ENCODE measurements at regions of chr9 and their contacts with region 1.

Region 1: GRCh38 chr9:128304149-128304974 is 17.9 kb downstream of the TRUB2 start:
- DNase-seq: no peak
- ATAC-seq: no peak
- H3K4me3 ChIP-seq: no peak overlapping the region
- H3K27ac ChIP-seq: no peak overlapping the region
- H3K4me1 ChIP-seq: peaks cover 48 to 59% of the 10 kb centered on the region in 2 experiments
- H3K27me3 ChIP-seq: no peaks in the 10 kb centered on the region
- CTCF ChIP-seq: no peak
- POLR2A ChIP-seq: no peak
- RAD21 ChIP-seq: no peak

Region 2: DNA sequence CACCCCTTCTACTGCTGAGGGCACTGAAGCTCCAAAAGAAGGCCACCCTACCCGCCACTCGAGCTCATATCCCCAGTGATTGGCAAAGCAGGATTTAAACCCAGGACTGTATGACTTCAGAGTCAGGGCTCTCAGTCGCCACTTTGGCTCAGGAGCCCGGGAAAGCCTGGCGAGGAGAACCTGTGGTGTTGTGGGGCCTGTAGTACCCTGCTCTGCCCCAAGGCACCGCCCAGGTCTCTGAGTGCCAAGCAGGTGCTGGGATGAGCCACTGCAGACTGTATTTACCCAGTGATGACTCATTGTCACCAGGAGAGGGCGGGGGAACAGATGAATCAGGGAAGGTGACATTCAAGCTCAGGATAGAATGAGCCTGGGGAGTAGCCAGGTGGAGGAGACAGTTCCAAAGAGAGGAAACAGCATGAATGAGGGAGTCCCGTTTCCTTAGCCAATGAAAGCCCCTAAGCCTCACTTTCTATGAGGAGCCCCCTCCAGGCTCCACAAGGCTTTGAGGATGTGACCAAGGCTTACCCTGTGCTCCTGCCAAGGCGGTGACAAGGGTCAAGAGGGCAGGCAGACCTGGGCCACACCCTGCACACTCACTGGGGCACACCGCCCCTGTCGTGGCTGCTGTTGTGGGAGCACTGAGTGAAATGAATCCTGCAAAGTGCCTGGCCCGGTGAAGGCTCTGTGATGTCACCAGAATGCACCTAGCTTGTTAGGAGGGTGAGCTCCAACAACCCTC is 348.9 kb before region 1 on chr9:
- CTCF ChIA-PET with region 1: no interaction called
- POLR2A ChIA-PET with region 1: no interaction called
- RAD21 ChIA-PET with region 1: no interaction called
- intact Hi-C with region 1: no loop called
- DNase-seq: peak; percentile 98
- ATAC-seq: peak; percentile 93
- H3K4me3 ChIP-seq: peak overlapping the region; percentile 26 to 49
- H3K27ac ChIP-seq: peak overlapping the region; percentile 79
- H3K4me1 ChIP-seq: peaks cover 61 to 79% of the 10 kb centered on the region in 2 experiments
- H3K27me3 ChIP-seq: no peaks in the 10 kb centered on the region
- CTCF ChIP-seq: peak in 2 of 3 experiments; percentile 45 to 57; a peak in 4 of 6 replicates
- POLR2A ChIP-seq: no peak
- RAD21 ChIP-seq: no peak

Region 3: DNA sequence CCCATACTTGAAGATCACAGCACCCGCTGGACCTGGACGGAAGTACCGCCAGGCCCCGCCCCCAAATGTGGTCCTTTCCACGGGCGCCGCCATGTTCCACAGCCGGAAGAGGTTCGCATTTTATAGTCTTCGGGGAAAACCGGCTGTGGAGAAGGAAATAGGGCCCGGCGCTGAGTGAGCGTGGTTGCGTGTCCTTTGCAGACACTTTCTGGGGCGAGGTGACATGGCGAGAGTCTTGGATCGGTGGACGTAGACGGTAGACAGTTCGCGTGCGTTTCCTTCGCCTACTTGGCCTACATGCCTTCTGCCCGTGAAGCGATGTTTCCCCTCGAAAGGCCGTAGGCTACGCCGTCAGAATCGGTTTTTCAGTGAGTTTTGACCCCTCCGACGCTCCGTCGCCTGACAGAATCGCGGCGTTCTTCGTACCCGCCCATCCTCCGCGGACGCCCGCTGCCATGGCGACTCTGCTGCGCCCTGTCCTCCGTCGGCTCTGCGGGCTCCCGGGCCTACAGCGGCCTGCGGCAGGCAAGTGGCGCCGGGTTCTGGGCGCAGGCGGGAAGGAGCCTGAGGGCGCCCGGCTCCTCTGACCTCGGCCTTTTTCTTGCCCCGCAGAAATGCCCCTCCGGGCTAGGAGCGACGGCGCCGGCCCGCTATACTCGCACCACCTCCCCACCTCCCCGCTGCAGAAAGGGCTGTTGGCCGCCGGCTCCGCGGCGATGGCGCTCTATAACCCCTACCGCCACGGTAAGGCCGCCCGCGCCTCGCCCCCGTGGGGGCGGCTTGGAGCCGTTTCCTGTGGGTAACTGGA is 18.2 kb after region 1 on chr9 and contains the starts of genes COQ4 and TRUB2:
- CTCF ChIA-PET with region 1: no interaction called
- POLR2A ChIA-PET with region 1: interaction called, 5 read pairs
- RAD21 ChIA-PET with region 1: no interaction called
- intact Hi-C with region 1: loop called (anchors 2 kb)
- DNase-seq: peak; percentile 92
- ATAC-seq: peak; percentile 86
- H3K4me3 ChIP-seq: peak within 1 kb of the TSS; percentile 99 to 100
- H3K27ac ChIP-seq: peak within 1 kb of the TSS; percentile 93
- H3K4me1 ChIP-seq: peaks cover 8 to 19% of the 10 kb centered on the region in 2 experiments
- H3K27me3 ChIP-seq: no peaks in the 10 kb centered on the region
- CTCF ChIP-seq: no peak
- POLR2A ChIP-seq: peak; percentile 27
- RAD21 ChIP-seq: no peak
- total RNA-seq, gene COQ4: 45.8 TPM
- total RNA-seq, gene TRUB2: 42.1 TPM

Region 4: DNA sequence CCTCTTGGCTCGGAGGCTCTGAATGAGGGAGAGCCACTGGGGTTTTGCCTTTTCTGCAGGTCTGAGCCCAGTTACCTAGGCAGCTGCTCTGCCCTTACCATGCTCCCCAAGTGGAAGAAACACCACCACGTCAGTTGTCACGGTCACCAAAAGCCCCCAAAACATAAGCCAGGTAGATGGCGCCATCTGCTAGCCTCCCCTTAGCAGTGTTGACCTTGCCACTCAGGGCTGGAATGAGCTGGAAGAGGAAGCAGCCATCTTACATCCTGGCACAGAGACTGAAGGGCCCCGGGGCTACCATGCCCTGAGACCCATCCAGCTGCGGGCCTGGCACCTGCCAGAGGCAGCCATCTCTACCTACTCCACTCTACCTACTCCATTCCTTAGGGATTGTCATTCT is 460.0 kb after region 1 on chr9:
- CTCF ChIA-PET with region 1: no interaction called
- POLR2A ChIA-PET with region 1: no interaction called
- RAD21 ChIA-PET with region 1: no interaction called
- intact Hi-C with region 1: no loop called
- DNase-seq: no peak
- ATAC-seq: peak; percentile 60
- H3K4me3 ChIP-seq: no peak overlapping the region
- H3K27ac ChIP-seq: no peak overlapping the region
- H3K4me1 ChIP-seq: no peaks in the 10 kb centered on the region
- H3K27me3 ChIP-seq: no peaks in the 10 kb centered on the region
- CTCF ChIP-seq: peak in 1 of 3 experiments; percentile 17; a peak in 2 of 6 replicates
- POLR2A ChIP-seq: no peak
- RAD21 ChIP-seq: peak; percentile 31; the same call in 1 of the 2 replicates